Heart left ventricle (tissue), 16 donors: ENCODE measurements at regions of chr9 and their contacts with region 1.

Region 1: DNA sequence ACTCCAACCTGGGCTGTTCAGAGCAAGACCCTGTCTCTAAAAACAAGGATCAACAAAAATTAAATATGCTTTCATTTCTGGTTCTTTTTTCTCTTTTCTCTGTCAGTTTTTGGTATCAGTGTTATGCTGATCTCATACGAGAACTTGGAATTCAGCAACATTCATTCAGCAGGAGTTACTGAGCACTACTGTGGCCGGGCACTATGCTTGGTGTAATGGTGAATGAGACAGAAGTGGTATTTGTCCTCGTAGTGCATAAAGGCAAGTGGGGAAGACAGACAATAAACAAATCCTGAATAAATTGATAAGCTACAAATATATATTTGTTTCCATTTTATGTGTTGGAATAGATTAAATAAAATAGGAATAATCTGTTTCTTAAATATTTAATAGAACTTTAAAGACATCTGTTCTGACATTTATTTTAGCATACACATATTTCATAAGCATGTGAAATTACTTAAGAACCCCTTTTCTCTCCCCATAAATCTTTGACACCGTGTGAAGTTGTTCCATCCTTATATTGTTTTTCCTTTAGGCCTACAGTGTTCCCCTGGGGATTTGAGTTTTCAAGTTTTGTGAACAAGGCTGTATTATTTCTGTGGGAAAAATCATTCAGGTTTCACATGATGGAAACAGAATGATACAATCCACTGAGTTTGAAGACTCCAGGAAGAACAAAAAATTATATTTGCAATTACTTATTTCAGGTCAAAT is 24.6 kb downstream of the UBAP1 start:
- DNase-seq: no peak
- ATAC-seq: no peak
- H3K4me3 ChIP-seq: no peak overlapping the region
- H3K27ac ChIP-seq: peak overlapping the region in 1 of 12 donors; percentile 40
- H3K4me1 ChIP-seq: peaks cover 0 to 52% (median 34%) of the 10 kb centered on the region in 12 donors
- H3K27me3 ChIP-seq: no peaks in the 10 kb centered on the region
- CTCF ChIP-seq: no peak
- POLR2A ChIP-seq: no peak

Region 2: DNA sequence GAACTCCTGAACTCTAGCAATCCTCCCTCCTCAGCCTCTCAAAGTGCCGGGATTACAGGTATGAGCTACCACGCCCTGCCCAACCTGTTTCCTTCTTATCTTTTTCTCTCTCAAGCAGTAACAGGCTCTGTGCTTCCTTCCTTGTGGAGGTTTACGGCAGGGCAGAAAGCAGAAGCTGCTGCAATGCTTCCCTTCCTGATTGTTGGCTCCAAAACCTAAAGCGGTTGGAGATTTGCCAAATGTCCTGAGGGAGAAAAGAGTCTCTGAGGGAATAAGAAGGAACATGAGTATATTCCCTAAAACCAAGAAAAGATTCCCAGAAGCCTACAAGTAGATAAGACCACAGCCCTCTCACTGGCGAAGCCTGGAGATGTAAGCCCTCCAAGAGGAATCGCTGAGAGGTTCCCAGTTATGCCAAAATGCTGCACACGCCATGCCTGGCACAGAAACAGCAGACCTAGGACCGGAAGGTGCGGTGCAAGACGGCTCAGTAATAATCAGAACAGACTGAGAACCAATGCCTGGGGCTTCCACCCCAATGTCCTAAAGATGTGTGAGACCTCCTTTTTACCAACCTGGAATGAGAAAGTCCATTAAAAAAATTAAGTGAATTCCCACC is 1275.2 kb before region 1 on chr9:
- intact Hi-C with region 1: no loop called
- DNase-seq: peak in 2 of 5 donors; percentile 18 to 31
- ATAC-seq: peak in 1 of 4 donors; percentile 29
- H3K4me3 ChIP-seq: no peak overlapping the region
- H3K27ac ChIP-seq: no peak overlapping the region
- H3K4me1 ChIP-seq: peaks cover 0 to 10% (median 1%) of the 10 kb centered on the region in 12 donors
- H3K27me3 ChIP-seq: no peaks in the 10 kb centered on the region
- CTCF ChIP-seq: no peak
- POLR2A ChIP-seq: no peak

Region 3: GRCh38 chr9:33731142-33731541 is 472.3 kb before region 1 on chr9:
- intact Hi-C with region 1: no loop called
- DNase-seq: no peak
- ATAC-seq: peak in 1 of 4 donors; percentile 18
- H3K4me3 ChIP-seq: no peak overlapping the region
- H3K27ac ChIP-seq: no peak overlapping the region
- H3K4me1 ChIP-seq: no peaks in the 10 kb centered on the region
- H3K27me3 ChIP-seq: no peaks in the 10 kb centered on the region
- CTCF ChIP-seq: no peak
- POLR2A ChIP-seq: no peak

Region 4: GRCh38 chr9:34233672-34234071 is 30.2 kb after region 1 on chr9:
- intact Hi-C with region 1: loop called in 1 of 10 experiments (anchors 5 kb)
- DNase-seq: no peak
- ATAC-seq: no peak
- H3K4me3 ChIP-seq: no peak overlapping the region
- H3K27ac ChIP-seq: no peak overlapping the region
- H3K4me1 ChIP-seq: peaks cover 0 to 6% (median 0%) of the 10 kb centered on the region in 12 donors
- H3K27me3 ChIP-seq: no peaks in the 10 kb centered on the region
- CTCF ChIP-seq: no peak
- POLR2A ChIP-seq: no peak